ENCODE measurements at regions of chr4 and their contacts with region 1.

Region 1: DNA sequence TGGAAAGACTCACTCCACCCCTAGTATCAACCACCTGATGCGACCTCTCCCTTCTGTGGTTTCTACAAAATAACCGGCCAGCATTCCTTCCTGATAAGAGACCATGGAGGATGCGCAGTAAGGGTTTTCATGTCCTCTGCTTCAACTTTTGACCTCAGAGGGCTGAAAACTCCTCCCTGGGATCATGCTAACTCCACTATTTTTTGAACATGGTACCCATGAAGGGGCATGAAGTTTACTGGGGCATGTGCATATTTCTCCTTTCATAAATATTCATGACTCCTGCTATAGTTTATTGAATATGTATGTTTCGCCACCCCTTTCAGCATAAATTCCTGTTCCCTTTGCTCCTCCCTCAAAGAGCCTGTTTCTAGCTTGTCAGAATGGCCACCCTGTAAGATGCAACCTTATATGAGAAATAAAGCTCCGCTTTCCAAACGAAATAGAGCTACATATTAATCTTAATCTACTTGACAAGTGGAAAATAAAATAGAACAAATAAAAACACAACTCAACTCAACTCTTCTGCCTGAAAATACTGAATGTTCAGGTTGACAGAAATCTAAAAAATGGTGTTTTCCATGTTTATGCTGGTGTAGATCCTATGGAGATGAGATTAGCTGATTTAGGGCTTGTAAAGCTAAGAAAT is 89.5 kb upstream of the EXOC1L start:
- DNase-seq: no peak

Region 2: GRCh38 chr4:55742655-55743202 is 12.7 kb after region 1 on chr4:
- intact Hi-C with region 1: loop called in 1 of 2 experiments (anchors 1 kb)
- DNase-seq: no peak

Measured in posterior vena cava (tissue), 2 donors.